ENCODE measurements at regions of chr12 and their contacts with region 1.

Region 1: GRCh38 chr12:68686595-68687521 is at the start of gene NUP107:
- DNase-seq: peak; percentile 96 to 97
- ATAC-seq: peak; percentile 100
- H3K4me3 ChIP-seq: peak within 1 kb of the TSS; percentile 87 to 100 (median 96)
- H3K27ac ChIP-seq: peak within 1 kb of the TSS; percentile 70 to 87 (median 86)
- H3K4me1 ChIP-seq: peaks cover 13 to 18% of the 10 kb centered on the region in 2 donors
- H3K27me3 ChIP-seq: no peaks in the 10 kb centered on the region
- CTCF ChIP-seq: peak in 3 of 5 experiments; percentile 9 to 18 (median 16)
- POLR2A ChIP-seq: peak; percentile 16 to 37
- total RNA-seq, gene NUP107: 13.0 to 43.1 (median 25.9) TPM

Region 2: GRCh38 chr12:68303850-68304249 is 383.0 kb before region 1 on chr12:
- in situ Hi-C with region 1: no loop called
- intact Hi-C with region 1: no loop called
- DNase-seq: peak in 1 of 2 donors; percentile 5
- ATAC-seq: peak in 1 of 2 donors; percentile 39
- H3K4me3 ChIP-seq: no peak overlapping the region
- H3K27ac ChIP-seq: no peak overlapping the region
- H3K4me1 ChIP-seq: no peaks in the 10 kb centered on the region
- H3K27me3 ChIP-seq: no peaks in the 10 kb centered on the region
- CTCF ChIP-seq: no peak
- POLR2A ChIP-seq: no peak

Region 3: DNA sequence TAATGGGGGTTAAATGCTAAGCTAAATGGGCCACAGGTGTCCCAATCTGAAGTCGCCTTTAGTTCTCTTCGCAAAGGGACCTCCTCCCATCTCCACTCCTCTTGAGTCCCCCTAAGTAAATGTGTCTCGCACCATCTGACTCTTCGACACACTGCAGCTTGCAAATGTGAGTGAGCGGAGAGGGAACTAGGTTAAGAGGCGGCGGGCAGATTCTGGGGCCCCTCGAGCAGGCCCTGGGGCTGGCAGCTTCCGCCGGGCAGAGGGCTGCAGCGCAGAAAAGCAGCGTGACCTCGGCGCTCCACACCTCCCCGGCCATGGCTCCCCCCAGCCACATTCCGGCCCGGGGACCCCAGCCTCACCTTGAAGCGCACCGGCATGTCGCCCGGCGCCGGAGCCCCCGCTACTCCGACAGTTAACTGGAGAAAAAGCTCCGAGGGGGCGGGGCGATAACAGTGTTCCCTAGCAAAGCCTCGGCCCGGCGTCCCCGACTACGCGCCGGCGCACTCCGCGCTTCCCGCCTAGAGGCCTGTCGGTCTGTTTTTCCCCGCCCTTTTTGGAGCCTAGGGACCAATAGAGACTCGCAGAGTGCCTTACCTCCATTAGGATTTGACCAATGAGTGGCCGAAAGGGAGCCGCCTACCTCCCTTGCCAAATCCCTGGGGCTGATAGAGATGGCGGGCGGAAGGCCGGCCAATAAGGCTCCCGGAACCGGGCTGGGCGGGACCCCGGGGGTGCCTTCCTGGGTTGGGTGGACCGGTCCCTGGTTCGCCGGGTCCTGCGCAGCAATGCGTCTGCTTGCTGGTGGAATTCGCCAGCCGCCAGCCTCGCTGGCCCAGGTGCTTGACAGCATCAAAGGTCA is 354.8 kb before region 1 on chr12 and contains the start of gene MDM1:
- in situ Hi-C with region 1: no loop called
- intact Hi-C with region 1: loop called (anchors 1 kb)
- DNase-seq: peak; percentile 96 to 97
- ATAC-seq: peak; percentile 100
- H3K4me3 ChIP-seq: peak within 1 kb of the TSS; percentile 71 to 87 (median 84)
- H3K27ac ChIP-seq: peak within 1 kb of the TSS; percentile 41 to 71 (median 69)
- H3K4me1 ChIP-seq: peaks cover 0 to 8% of the 10 kb centered on the region in 2 donors
- H3K27me3 ChIP-seq: no peaks in the 10 kb centered on the region
- CTCF ChIP-seq: peak in 1 of 5 experiments; percentile 6
- POLR2A ChIP-seq: peak in 1 of 2 donors; percentile 33
- total RNA-seq, gene MDM1: 1.6 to 6.8 (median 3.4) TPM

Region 4: GRCh38 chr12:68358532-68359485 is 328.0 kb before region 1 on chr12:
- in situ Hi-C with region 1: loop called in 3 of 4 experiments (anchors 5 to 10 kb)
- intact Hi-C with region 1: loop called (anchors 1 kb)
- DNase-seq: peak; percentile 28 to 49
- ATAC-seq: peak; percentile 96
- H3K4me3 ChIP-seq: no peak overlapping the region
- H3K27ac ChIP-seq: peak overlapping the region in 3 of 4 donors; percentile 1 to 36 (median 25)
- H3K4me1 ChIP-seq: peaks cover 10 to 14% of the 10 kb centered on the region in 2 donors
- H3K27me3 ChIP-seq: no peaks in the 10 kb centered on the region
- CTCF ChIP-seq: peak; percentile 46 to 75 (median 69)
- POLR2A ChIP-seq: no peak

Region 5: GRCh38 chr12:68406134-68406594 is 280.7 kb before region 1 on chr12:
- in situ Hi-C with region 1: no loop called
- intact Hi-C with region 1: loop called (anchors 2 kb)
- DNase-seq: peak; percentile 84 to 93
- ATAC-seq: peak; percentile 95 to 98
- H3K4me3 ChIP-seq: peak overlapping the region in 3 of 4 donors; percentile 19 to 35 (median 19)
- H3K27ac ChIP-seq: peak overlapping the region; percentile 59 to 78 (median 76)
- H3K4me1 ChIP-seq: peaks cover 30 to 38% of the 10 kb centered on the region in 2 donors
- H3K27me3 ChIP-seq: no peaks in the 10 kb centered on the region
- CTCF ChIP-seq: peak; percentile 12 to 44 (median 33)
- POLR2A ChIP-seq: no peak

Region 6: DNA sequence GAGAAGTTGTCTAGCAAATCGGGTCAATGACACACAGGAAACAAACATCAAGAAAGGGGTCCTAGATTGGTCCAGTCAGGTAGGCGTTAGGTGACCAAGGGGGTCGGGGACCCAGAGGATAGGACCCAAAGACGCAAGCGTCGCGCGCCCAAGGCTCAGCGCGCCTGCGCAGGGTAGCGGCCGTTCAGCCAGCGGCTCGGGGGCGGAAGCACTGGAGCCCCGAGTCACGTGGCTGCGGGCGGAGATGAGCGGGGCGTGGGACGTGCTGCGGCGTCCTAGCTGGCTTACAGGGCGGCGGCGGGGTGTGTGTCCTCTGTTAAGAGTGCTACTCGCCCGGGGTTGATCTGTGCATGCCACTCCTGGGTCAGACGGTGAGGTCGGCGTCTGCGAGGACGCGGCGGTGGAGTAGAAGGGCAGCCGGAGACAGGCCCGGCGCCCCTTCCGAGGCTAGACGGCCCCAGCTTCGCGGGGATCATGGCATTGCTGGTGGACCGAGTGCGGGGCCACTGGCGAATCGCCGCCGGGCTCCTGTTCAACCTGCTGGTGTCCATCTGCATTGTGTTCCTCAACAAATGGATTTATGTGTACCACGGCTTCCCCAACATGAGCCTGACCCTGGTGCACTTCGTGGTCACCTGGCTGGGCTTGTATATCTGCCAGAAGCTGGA is 59.2 kb after region 1 on chr12 and contains the start of gene SLC35E3:
- in situ Hi-C with region 1: no loop called
- intact Hi-C with region 1: loop called (anchors 2 kb)
- DNase-seq: peak; percentile 85 to 90
- ATAC-seq: peak; percentile 95 to 96
- H3K4me3 ChIP-seq: peak within 1 kb of the TSS; percentile 63 to 92 (median 79)
- H3K27ac ChIP-seq: peak within 1 kb of the TSS; percentile 63 to 84 (median 80)
- H3K4me1 ChIP-seq: peaks cover 21 to 26% of the 10 kb centered on the region in 2 donors
- H3K27me3 ChIP-seq: no peaks in the 10 kb centered on the region
- CTCF ChIP-seq: no peak
- POLR2A ChIP-seq: peak; percentile 54 to 69
- total RNA-seq, gene SLC35E3: 0.92 to 2.7 (median 1.6) TPM